PC-3 (cell line): ENCODE measurements at regions of chr2 and their contacts with region 1.

Region 1: DNA sequence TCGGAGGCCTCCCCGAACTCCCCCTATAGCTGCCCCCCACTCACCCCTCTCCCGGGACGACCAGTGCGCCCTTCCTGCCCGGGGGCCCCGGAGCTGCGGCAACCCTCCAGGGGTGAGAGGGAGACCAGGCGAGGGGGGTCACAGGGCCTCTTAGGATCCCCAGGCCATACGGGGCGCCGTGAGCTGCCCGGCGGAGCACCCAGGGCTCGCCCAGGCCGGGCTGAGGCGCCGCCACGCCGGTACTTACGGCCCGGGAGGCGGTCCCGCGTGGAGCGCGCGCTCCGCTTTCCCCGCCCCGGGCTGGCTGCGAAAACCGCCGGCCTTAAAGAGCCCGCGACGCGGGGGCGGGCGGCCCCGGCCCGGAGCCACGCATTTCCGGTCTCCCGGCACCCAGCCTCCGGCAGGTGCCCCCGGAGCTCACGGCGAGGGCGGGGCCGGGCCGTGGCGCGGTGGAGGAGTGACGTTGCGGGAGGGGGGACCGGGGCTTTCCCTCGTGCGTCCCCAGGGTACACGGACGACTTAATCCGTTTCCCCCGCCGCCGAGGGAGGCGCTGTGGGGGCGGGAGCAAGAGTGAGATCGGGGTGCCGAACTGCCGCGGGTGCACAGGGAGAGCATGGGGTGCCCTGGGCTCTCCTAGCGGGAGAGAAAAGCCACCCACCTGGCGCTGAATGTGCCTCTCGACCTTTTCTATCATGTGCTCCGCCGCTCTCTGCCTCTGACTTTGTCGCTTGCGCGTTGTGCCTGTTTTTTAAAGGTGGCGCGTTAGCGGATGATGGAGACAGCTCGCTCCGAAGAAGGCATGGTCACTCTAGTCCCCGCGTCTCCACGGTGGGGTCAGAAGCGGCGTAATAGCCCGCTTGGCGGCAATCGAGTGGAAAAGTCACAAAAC is at the start of gene METTL21A:
- DNase-seq: peak; percentile 94
- ATAC-seq: peak; percentile 78
- H3K4me3 ChIP-seq: peak within 1 kb of the TSS; percentile 80
- H3K27ac ChIP-seq: peak within 1 kb of the TSS; percentile 100
- H3K4me1 ChIP-seq: peaks cover 9% of the 10 kb centered on the region
- H3K27me3 ChIP-seq: no peaks in the 10 kb centered on the region
- CTCF ChIP-seq: no peak; the same call in 1 of the 2 replicates
- total RNA-seq, gene METTL21A: 35.3 and 66.3 TPM in 2 replicates

Region 2: DNA sequence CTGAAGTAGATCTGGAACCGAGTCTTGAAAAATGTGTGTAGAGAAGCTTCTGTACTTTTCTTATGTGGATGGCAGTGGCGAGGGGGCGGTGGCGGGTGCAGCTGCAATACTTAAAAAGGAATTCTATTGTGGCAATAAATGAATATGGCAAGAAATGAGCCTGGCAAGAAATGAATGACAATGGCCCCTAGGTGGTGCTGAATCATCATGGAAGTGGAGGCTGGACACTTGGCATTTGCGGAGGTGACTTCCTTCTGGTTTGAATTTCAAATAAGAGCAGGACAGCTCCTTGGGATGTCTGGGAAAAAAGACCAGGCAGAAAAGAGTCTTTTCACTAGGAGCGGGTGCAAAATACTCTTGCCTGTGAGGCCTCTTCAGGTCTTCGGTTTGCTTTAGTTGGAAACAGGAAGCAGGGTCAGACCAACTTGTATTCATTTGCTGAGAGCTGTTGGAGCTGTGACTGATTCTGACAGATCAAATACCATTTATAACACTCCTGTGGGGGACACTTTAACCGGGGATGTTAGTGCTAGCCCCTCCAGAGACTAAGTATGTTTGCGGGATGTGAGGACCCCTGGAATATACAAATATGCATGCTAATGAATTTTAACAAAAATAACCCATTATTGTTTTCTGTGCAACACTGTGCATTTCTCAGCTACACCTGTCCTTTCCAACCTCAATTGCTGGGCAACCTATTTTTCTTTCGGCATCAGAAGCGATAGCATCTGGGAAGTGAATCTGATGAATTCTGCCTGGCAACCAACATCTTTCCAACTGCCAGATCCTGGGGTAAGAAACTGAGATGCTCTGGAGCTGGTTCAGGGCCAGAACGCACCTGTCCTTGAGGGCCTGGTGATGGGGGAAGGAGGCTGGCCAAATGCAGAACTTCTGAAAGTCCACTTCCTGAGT is 824.5 kb before region 1 on chr2:
- CTCF ChIA-PET with region 1: no interaction called
- POLR2A ChIA-PET with region 1: no interaction called
- intact Hi-C with region 1: loop called (anchors 10 kb)
- DNase-seq: peak; percentile 82
- ATAC-seq: peak; percentile 84
- H3K4me3 ChIP-seq: no peak overlapping the region
- H3K27ac ChIP-seq: no peak overlapping the region
- H3K4me1 ChIP-seq: 0 out of 2 replicates have a peak, but pooled peaks cover 6% of the 10 kb centered on the region
- H3K27me3 ChIP-seq: no peaks in the 10 kb centered on the region
- CTCF ChIP-seq: peak; percentile 89

Region 3: GRCh38 chr2:207529330-207530159 is 95.7 kb before region 1 on chr2 and contains the start of gene CREB1:
- CTCF ChIA-PET with region 1: interaction called, 3 read pairs
- POLR2A ChIA-PET with region 1: interaction called, 14 read pairs
- intact Hi-C with region 1: loop called (anchors 1 kb)
- DNase-seq: peak; percentile 99
- ATAC-seq: peak; percentile 89
- H3K4me3 ChIP-seq: peak within 1 kb of the TSS; percentile 83
- H3K27ac ChIP-seq: peak within 1 kb of the TSS; percentile 89
- H3K4me1 ChIP-seq: peaks cover 25% of the 10 kb centered on the region
- H3K27me3 ChIP-seq: no peaks in the 10 kb centered on the region
- CTCF ChIP-seq: no peak
- total RNA-seq, gene CREB1: 34.8 and 43.5 TPM in 2 replicates

Region 4: GRCh38 chr2:207662203-207662602 is 36.9 kb after region 1 on chr2:
- CTCF ChIA-PET with region 1: interaction called, 3 read pairs
- POLR2A ChIA-PET with region 1: no interaction called
- intact Hi-C with region 1: loop called (anchors 1 kb)
- DNase-seq: no peak
- ATAC-seq: no peak
- H3K4me3 ChIP-seq: no peak overlapping the region
- H3K27ac ChIP-seq: no peak overlapping the region
- H3K4me1 ChIP-seq: peaks cover 6% of the 10 kb centered on the region
- H3K27me3 ChIP-seq: no peaks in the 10 kb centered on the region
- CTCF ChIP-seq: no peak

Region 5: GRCh38 chr2:207676827-207677354 is 51.6 kb after region 1 on chr2:
- CTCF ChIA-PET with region 1: no interaction called
- POLR2A ChIA-PET with region 1: no interaction called
- intact Hi-C with region 1: no loop called
- DNase-seq: peak; percentile 80
- ATAC-seq: peak; percentile 60
- H3K4me3 ChIP-seq: peak overlapping the region; percentile 20; the same call in 1 of the 2 replicates
- H3K27ac ChIP-seq: peak overlapping the region; percentile 53
- H3K4me1 ChIP-seq: peaks cover 13% of the 10 kb centered on the region
- H3K27me3 ChIP-seq: no peaks in the 10 kb centered on the region
- CTCF ChIP-seq: no peak

Region 6: GRCh38 chr2:207710814-207711740 is 85.8 kb after region 1 on chr2 and contains the start of gene CCNYL1:
- CTCF ChIA-PET with region 1: interaction called, 18 read pairs
- POLR2A ChIA-PET with region 1: interaction called, 7 read pairs
- intact Hi-C with region 1: loop called (anchors 1 kb)
- DNase-seq: peak; percentile 99
- ATAC-seq: peak; percentile 94
- H3K4me3 ChIP-seq: peak within 1 kb of the TSS; percentile 79
- H3K27ac ChIP-seq: peak within 1 kb of the TSS; percentile 91
- H3K4me1 ChIP-seq: peaks cover 36% of the 10 kb centered on the region
- H3K27me3 ChIP-seq: no peaks in the 10 kb centered on the region
- CTCF ChIP-seq: no peak
- total RNA-seq, gene CCNYL1: 14.7 and 19.2 TPM in 2 replicates

Region 7: GRCh38 chr2:207734264-207734635 is 109.0 kb after region 1 on chr2:
- CTCF ChIA-PET with region 1: interaction called, 7 read pairs
- POLR2A ChIA-PET with region 1: interaction called, 5 read pairs
- intact Hi-C with region 1: loop called (anchors 1 kb)
- DNase-seq: peak; percentile 70
- ATAC-seq: peak; percentile 95
- H3K4me3 ChIP-seq: no peak overlapping the region
- H3K27ac ChIP-seq: no peak overlapping the region
- H3K4me1 ChIP-seq: no peaks in the 10 kb centered on the region
- H3K27me3 ChIP-seq: no peaks in the 10 kb centered on the region
- CTCF ChIP-seq: peak; percentile 76

Region 8: GRCh38 chr2:208265801-208266552 is 640.7 kb after region 1 on chr2 and contains the start of gene PIKFYVE:
- CTCF ChIA-PET with region 1: no interaction called
- POLR2A ChIA-PET with region 1: no interaction called
- intact Hi-C with region 1: loop called (anchors 5 kb)
- DNase-seq: peak; percentile 97
- ATAC-seq: peak; percentile 90
- H3K4me3 ChIP-seq: peak within 1 kb of the TSS; percentile 98
- H3K27ac ChIP-seq: peak within 1 kb of the TSS; percentile 50
- H3K4me1 ChIP-seq: peaks cover 23% of the 10 kb centered on the region
- H3K27me3 ChIP-seq: no peaks in the 10 kb centered on the region
- CTCF ChIP-seq: no peak
- total RNA-seq, gene PIKFYVE: 18.8 and 19.4 TPM in 2 replicates